Activated CD4-positive, alpha-beta T cell treated with anti-CD3 and anti-CD28 coated beads, Interleukin-2, amount 10 ng/mL, durations not matched to agents 7 days and 5 days (primary cell): ENCODE measurements at regions of chr22 and their contacts with region 1.

Region 1: GRCh38 chr22:46006379-46007002 is 29.5 kb upstream of the WNT7B start:
- DNase-seq: peak; percentile 89
- H3K4me3 Mint-ChIP-seq: no peak overlapping the region
- H3K27ac Mint-ChIP-seq: no peak overlapping the region
- H3K4me1 Mint-ChIP-seq: peaks cover 11% of the 10 kb centered on the region
- H3K27me3 Mint-ChIP-seq: no peaks in the 10 kb centered on the region

Region 2: DNA sequence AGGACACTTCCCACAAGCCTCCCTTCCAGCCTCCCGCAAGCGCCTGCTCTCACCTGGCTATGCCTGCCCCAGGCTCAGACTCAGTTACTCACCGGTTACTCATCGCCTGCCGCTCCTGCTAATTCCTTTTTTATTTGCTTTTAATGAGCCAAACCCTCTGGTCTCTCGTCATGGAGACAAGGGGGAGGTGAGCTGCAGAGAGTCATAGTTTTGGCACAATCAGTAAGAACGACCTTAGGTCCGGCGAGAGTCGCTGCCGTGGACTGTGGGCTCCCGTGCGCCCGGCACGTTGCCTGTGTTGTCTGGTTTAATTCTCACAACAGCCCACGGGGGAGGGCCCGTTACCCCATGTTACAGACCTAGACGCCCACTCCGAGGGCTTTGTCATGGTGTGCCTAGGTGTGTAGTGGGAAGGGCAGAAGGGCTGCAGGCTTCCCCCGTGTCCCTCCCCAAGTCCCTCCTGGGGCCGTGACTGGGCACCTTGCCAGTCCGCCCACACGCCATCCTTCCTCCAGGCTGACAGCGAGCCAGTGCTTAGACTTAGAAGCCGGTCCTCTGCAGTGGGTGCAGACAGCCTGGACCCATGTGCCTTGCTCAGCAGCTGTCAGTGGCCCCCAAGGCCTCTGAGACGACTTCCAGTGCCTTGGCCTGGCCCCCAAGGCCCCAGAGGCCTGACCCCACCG is 71.7 kb before region 1 on chr22:
- CTCF ChIA-PET with region 1: no interaction called
- POLR2A ChIA-PET with region 1: no interaction called
- DNase-seq: no peak
- H3K4me3 Mint-ChIP-seq: no peak overlapping the region
- H3K27ac Mint-ChIP-seq: no peak overlapping the region
- H3K4me1 Mint-ChIP-seq: no peaks in the 10 kb centered on the region
- H3K27me3 Mint-ChIP-seq: peaks cover 3% of the 10 kb centered on the region

Region 3: DNA sequence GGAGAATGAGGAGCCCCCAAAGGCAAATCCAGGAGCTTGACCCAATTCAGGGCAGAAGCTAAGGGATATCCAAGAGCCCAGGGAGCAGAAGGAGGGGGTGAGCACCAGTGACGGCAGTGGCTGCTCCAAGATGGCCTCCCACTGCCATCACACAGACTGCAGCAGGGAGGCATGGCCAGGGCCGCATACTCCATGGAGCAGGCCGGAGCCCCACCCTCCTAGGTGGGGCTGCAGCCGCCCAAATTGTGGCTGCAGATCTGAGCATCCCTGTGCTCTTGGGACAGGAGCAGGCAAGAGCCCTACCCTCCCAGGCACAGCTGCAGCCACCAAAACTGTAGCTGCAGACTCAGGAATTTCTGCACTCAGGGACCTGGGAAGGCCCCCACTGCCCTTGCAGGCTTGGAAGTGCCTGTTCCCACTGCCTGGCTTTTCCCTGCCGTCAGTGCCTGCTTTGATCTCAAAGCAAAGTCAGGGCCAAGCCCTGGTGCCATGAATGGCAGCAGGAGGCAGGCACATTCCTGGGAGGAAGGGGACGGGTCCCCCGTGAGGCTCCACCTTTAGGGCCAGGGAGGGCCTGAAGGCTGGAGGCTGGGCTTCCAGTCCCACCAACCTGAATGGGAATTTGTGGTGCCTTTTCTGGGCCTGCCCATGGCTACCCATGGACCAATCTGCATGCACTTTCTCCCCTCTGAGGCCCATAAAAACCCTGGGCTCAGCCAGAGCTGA is 19.2 kb before region 1 on chr22:
- CTCF ChIA-PET with region 1: interaction called, 11 read pairs
- POLR2A ChIA-PET with region 1: no interaction called
- DNase-seq: no peak
- H3K4me3 Mint-ChIP-seq: no peak overlapping the region
- H3K27ac Mint-ChIP-seq: no peak overlapping the region
- H3K4me1 Mint-ChIP-seq: no peaks in the 10 kb centered on the region
- H3K27me3 Mint-ChIP-seq: no peaks in the 10 kb centered on the region

Region 4: GRCh38 chr22:45994491-45995404 is 11.7 kb before region 1 on chr22:
- CTCF ChIA-PET with region 1: interaction called, 12 read pairs
- POLR2A ChIA-PET with region 1: no interaction called
- DNase-seq: peak; percentile 78
- H3K4me3 Mint-ChIP-seq: no peak overlapping the region
- H3K27ac Mint-ChIP-seq: no peak overlapping the region
- H3K4me1 Mint-ChIP-seq: peaks cover 2% of the 10 kb centered on the region
- H3K27me3 Mint-ChIP-seq: peaks cover 4% of the 10 kb centered on the region

Region 5: GRCh38 chr22:46019351-46019750 is 12.9 kb after region 1 on chr22:
- CTCF ChIA-PET with region 1: interaction called, 12 read pairs
- POLR2A ChIA-PET with region 1: interaction called, 3 read pairs
- DNase-seq: no peak
- H3K4me3 Mint-ChIP-seq: no peak overlapping the region
- H3K27ac Mint-ChIP-seq: no peak overlapping the region
- H3K4me1 Mint-ChIP-seq: no peaks in the 10 kb centered on the region
- H3K27me3 Mint-ChIP-seq: peaks cover 16% of the 10 kb centered on the region

Region 6: GRCh38 chr22:46108564-46109473 is 102.3 kb after region 1 on chr22:
- CTCF ChIA-PET with region 1: interaction called, 70 read pairs
- POLR2A ChIA-PET with region 1: no interaction called
- DNase-seq: no peak
- H3K4me3 Mint-ChIP-seq: no peak overlapping the region
- H3K27ac Mint-ChIP-seq: no peak overlapping the region
- H3K4me1 Mint-ChIP-seq: no peaks in the 10 kb centered on the region
- H3K27me3 Mint-ChIP-seq: no peaks in the 10 kb centered on the region

Region 7: GRCh38 chr22:46116491-46116958 is 110.0 kb after region 1 on chr22:
- CTCF ChIA-PET with region 1: interaction called, 70 read pairs
- POLR2A ChIA-PET with region 1: no interaction called
- DNase-seq: peak; percentile 89
- H3K4me3 Mint-ChIP-seq: no peak overlapping the region
- H3K27ac Mint-ChIP-seq: no peak overlapping the region
- H3K4me1 Mint-ChIP-seq: peaks cover 4% of the 10 kb centered on the region
- H3K27me3 Mint-ChIP-seq: no peaks in the 10 kb centered on the region

Region 8: GRCh38 chr22:46122511-46122971 is 116.0 kb after region 1 on chr22:
- CTCF ChIA-PET with region 1: interaction called, 70 read pairs
- POLR2A ChIA-PET with region 1: no interaction called
- DNase-seq: peak; percentile 72
- H3K4me3 Mint-ChIP-seq: no peak overlapping the region
- H3K27ac Mint-ChIP-seq: no peak overlapping the region
- H3K4me1 Mint-ChIP-seq: peaks cover 4% of the 10 kb centered on the region
- H3K27me3 Mint-ChIP-seq: no peaks in the 10 kb centered on the region